Tibial artery (tissue), 4 donors: ENCODE measurements at regions of chr22 and their contacts with region 1.

Region 1: GRCh38 chr22:22855617-22856308 is 31.9 kb upstream of the IGLL5 start:
- DNase-seq: no peak
- H3K4me3 ChIP-seq: no peak overlapping the region
- H3K27ac ChIP-seq: no peak overlapping the region
- H3K4me1 ChIP-seq: no peaks in the 10 kb centered on the region
- H3K27me3 ChIP-seq: peaks cover 0 to 49% of the 10 kb centered on the region in 2 donors
- CTCF ChIP-seq: peak in 1 of 2 experiments; percentile 14

Region 2: GRCh38 chr22:22959147-22959827 is 103.5 kb after region 1 on chr22:
- intact Hi-C with region 1: loop called (anchors 10 kb)
- DNase-seq: peak in 1 of 2 donors; percentile 51
- H3K4me3 ChIP-seq: no peak overlapping the region
- H3K27ac ChIP-seq: no peak overlapping the region
- H3K4me1 ChIP-seq: no peaks in the 10 kb centered on the region
- H3K27me3 ChIP-seq: peaks cover 0 to 30% of the 10 kb centered on the region in 2 donors
- CTCF ChIP-seq: peak; percentile 67 to 79

Region 3: GRCh38 chr22:23128269-23129108 is 272.7 kb after region 1 on chr22:
- intact Hi-C with region 1: loop called (anchors 10 kb)
- DNase-seq: peak; percentile 55 to 75
- H3K4me3 ChIP-seq: no peak overlapping the region
- H3K27ac ChIP-seq: no peak overlapping the region
- H3K4me1 ChIP-seq: no peaks in the 10 kb centered on the region
- H3K27me3 ChIP-seq: no peaks in the 10 kb centered on the region
- CTCF ChIP-seq: peak; percentile 74 to 85